Activated T-helper 2 cell treated with anti-CD3 and anti-CD28 coated beads, Interferon-gamma antibody, Interleukin-2, Interleukin-4, amounts not matched to agents 10 μg/mL and 5 μg/mL and 100 μg/mL, durations not matched to agents 14 hours and 24 hours and 36 hours (primary cell): ENCODE measurements at regions of chr11 and their contacts with region 1.

Region 1: GRCh38 chr11:77136074-77136473 is 8.0 kb downstream of the MYO7A start:
- DNase-seq: no peak
- H3K4me3 Mint-ChIP-seq: no peak overlapping the region
- H3K27ac Mint-ChIP-seq: no peak overlapping the region
- H3K4me1 Mint-ChIP-seq: peaks cover 14% of the 10 kb centered on the region
- H3K27me3 Mint-ChIP-seq: peaks cover 16% of the 10 kb centered on the region

Region 2: GRCh38 chr11:77151804-77152509 is 15.9 kb after region 1 on chr11:
- intact Hi-C with region 1: loop called (anchors 2 kb)
- DNase-seq: peak; percentile 52
- H3K4me3 Mint-ChIP-seq: peak overlapping the region; percentile 17
- H3K27ac Mint-ChIP-seq: peak overlapping the region; percentile 46
- H3K4me1 Mint-ChIP-seq: peaks cover 36% of the 10 kb centered on the region
- H3K27me3 Mint-ChIP-seq: peaks cover 9% of the 10 kb centered on the region

Region 3: GRCh38 chr11:77187776-77188632 is 51.9 kb after region 1 on chr11:
- intact Hi-C with region 1: no loop called
- DNase-seq: peak; percentile 53
- H3K4me3 Mint-ChIP-seq: no peak overlapping the region
- H3K27ac Mint-ChIP-seq: no peak overlapping the region
- H3K4me1 Mint-ChIP-seq: no peaks in the 10 kb centered on the region
- H3K27me3 Mint-ChIP-seq: no peaks in the 10 kb centered on the region